ENCODE measurements at regions of chr1 and their contacts with region 1.

Region 1: DNA sequence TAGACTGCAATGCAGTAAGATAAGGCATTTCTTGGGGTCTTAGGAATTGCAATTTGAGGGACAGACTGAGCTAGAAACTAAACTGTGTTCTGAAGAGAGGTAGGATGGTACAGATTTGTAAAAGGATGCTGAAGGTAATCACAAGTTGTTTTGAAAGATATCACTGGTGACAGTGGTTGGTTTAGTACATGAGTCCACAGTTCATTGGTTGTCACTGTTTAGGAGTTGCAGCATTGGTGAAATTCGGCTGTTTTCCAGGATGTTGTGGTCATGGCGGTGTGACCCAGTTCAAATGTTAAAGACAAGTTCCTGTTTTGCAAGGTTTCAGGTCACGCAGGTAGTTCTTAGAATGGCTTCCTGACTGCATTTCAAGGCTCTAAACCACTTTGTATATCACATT is 292.8 kb upstream of the B3GALT2 start:
- DNase-seq: peak; percentile 89 to 95 (median 93)
- H3K4me3 ChIP-seq: no peak overlapping the region
- H3K4me3 Mint-ChIP-seq: peak overlapping the region in 7 of 8 donors; percentile 37 to 79 (median 65)
- H3K27ac ChIP-seq: peak overlapping the region; percentile 68
- H3K27ac Mint-ChIP-seq: peak overlapping the region; percentile 86 to 98 (median 96)
- H3K4me1 ChIP-seq: peaks cover 70% of the 10 kb centered on the region
- H3K4me1 Mint-ChIP-seq: peaks cover 42 to 75% (median 47%) of the 10 kb centered on the region in 4 donors
- H3K27me3 ChIP-seq: no peaks in the 10 kb centered on the region
- H3K27me3 Mint-ChIP-seq: no peaks in the 10 kb centered on the region

Region 2: DNA sequence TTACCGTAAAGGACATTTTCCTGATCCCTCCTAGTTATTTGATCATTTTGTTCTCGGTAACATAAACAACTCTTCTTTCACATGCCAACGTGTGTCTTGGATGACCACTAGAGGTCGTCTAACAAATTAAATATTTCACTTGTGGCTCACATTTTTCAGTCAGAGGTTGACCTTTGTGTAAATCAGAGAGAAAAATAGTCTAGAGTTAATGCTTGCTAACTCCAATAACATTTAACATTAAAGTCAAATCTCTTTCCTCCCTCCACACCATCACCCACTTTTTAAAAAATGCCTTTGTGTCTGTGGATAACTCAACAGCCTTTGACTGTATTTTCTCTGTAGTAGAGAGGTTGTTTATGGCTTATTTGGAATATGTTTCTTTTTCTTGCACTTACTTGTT is 72.3 kb before region 1 on chr1:
- CTCF ChIA-PET with region 1: interaction called, 3 read pairs
- POLR2A ChIA-PET with region 1: interaction called, 8 read pairs
- intact Hi-C with region 1: loop called (anchors 1 kb)
- DNase-seq: peak in 4 of 5 donors; percentile 48 to 63 (median 56)
- H3K4me3 ChIP-seq: no peak overlapping the region
- H3K4me3 Mint-ChIP-seq: peak overlapping the region in 6 of 8 donors; percentile 0 to 29 (median 8)
- H3K27ac ChIP-seq: no peak overlapping the region
- H3K27ac Mint-ChIP-seq: peak overlapping the region in 4 of 7 donors; percentile 15 to 81 (median 52)
- H3K4me1 ChIP-seq: peaks cover 26% of the 10 kb centered on the region
- H3K4me1 Mint-ChIP-seq: peaks cover 21 to 40% (median 29%) of the 10 kb centered on the region in 4 donors
- H3K27me3 ChIP-seq: no peaks in the 10 kb centered on the region
- H3K27me3 Mint-ChIP-seq: no peaks in the 10 kb centered on the region

Region 3: DNA sequence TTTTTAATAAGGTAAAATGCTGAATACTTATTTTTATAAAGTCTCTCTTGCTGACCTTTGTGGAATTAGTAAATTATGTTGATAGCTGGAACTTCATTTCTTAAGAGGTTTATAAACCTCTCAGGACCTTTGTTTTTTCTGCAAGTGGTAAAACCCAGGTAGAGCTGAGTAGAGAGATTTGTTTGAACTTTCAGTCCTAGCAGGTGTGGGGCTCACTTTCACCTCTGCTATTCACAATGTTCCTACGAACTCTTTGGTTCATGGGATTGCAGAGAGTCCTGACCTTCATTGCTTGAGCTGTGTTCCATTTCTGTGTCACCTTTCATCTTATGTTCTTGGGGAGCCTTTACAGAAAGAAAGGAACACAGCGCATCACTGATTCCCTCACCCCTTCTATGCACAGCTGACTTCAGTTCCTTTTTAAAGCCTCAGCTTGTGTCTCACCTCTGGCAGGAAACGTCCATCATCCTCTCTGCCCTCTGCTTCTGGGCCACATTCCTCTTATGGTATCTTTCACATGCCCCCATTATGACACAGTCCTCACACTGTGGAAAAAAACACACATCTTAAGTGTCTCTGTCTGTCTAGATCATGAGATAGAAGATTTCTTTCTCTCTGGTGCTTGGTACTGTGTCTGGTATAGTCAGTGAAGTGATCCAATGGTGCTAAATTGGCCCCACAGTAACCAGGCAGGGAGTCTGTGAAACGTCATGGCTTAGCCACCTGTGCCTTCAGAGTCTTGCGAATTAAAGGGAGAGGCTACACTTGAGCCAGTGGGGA is 30.3 kb before region 1 on chr1:
- CTCF ChIA-PET with region 1: interaction called, 3 read pairs
- POLR2A ChIA-PET with region 1: interaction called, 21 read pairs
- intact Hi-C with region 1: no loop called
- DNase-seq: peak; percentile 39 to 67 (median 41)
- H3K4me3 ChIP-seq: no peak overlapping the region
- H3K4me3 Mint-ChIP-seq: peak overlapping the region in 7 of 8 donors; percentile 1 to 53 (median 9)
- H3K27ac ChIP-seq: peak overlapping the region; percentile 36
- H3K27ac Mint-ChIP-seq: peak overlapping the region; percentile 68 to 95 (median 82)
- H3K4me1 ChIP-seq: peaks cover 18% of the 10 kb centered on the region
- H3K4me1 Mint-ChIP-seq: peaks cover 16 to 23% (median 18%) of the 10 kb centered on the region in 4 donors
- H3K27me3 ChIP-seq: no peaks in the 10 kb centered on the region
- H3K27me3 Mint-ChIP-seq: no peaks in the 10 kb centered on the region

Region 4: DNA sequence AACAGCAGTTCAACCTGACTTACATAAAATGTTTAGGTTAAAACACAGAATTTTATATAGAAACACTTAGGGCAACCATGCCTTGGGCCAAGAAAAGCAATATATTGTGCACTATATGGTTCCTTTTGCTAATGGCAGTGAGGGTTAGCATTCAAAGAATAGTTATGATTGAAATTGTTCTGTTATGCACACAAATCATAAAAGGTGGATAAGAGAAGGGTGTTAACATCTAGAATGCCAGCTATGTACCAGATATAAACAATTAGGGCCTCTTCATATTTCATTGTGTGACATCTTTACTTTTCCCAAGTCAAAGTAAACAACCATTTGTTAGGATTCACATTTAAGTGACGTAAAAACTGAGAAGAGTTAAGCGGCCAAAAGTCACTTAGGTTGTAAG is 15.2 kb after region 1 on chr1:
- CTCF ChIA-PET with region 1: interaction called, 3 read pairs
- POLR2A ChIA-PET with region 1: interaction called, 42 read pairs
- intact Hi-C with region 1: no loop called
- DNase-seq: no peak
- H3K4me3 ChIP-seq: no peak overlapping the region
- H3K4me3 Mint-ChIP-seq: no peak overlapping the region
- H3K27ac ChIP-seq: no peak overlapping the region
- H3K27ac Mint-ChIP-seq: peak overlapping the region in 4 of 7 donors; percentile 8 to 38 (median 26)
- H3K4me1 ChIP-seq: peaks cover 27% of the 10 kb centered on the region
- H3K4me1 Mint-ChIP-seq: peaks cover 22 to 45% (median 40%) of the 10 kb centered on the region in 4 donors
- H3K27me3 ChIP-seq: no peaks in the 10 kb centered on the region
- H3K27me3 Mint-ChIP-seq: no peaks in the 10 kb centered on the region

Region 5: GRCh38 chr1:193569096-193569982 is 90.2 kb after region 1 on chr1:
- CTCF ChIA-PET with region 1: no interaction called
- POLR2A ChIA-PET with region 1: no interaction called
- intact Hi-C with region 1: no loop called
- DNase-seq: peak; percentile 51 to 69 (median 57)
- H3K4me3 ChIP-seq: no peak overlapping the region
- H3K4me3 Mint-ChIP-seq: peak overlapping the region in 7 of 8 donors; percentile 45 to 84 (median 74)
- H3K27ac ChIP-seq: peak overlapping the region; percentile 43
- H3K27ac Mint-ChIP-seq: peak overlapping the region; percentile 79 to 99 (median 92)
- H3K4me1 ChIP-seq: peaks cover 26% of the 10 kb centered on the region
- H3K4me1 Mint-ChIP-seq: peaks cover 25 to 42% (median 33%) of the 10 kb centered on the region in 4 donors
- H3K27me3 ChIP-seq: no peaks in the 10 kb centered on the region
- H3K27me3 Mint-ChIP-seq: no peaks in the 10 kb centered on the region

Region 6: DNA sequence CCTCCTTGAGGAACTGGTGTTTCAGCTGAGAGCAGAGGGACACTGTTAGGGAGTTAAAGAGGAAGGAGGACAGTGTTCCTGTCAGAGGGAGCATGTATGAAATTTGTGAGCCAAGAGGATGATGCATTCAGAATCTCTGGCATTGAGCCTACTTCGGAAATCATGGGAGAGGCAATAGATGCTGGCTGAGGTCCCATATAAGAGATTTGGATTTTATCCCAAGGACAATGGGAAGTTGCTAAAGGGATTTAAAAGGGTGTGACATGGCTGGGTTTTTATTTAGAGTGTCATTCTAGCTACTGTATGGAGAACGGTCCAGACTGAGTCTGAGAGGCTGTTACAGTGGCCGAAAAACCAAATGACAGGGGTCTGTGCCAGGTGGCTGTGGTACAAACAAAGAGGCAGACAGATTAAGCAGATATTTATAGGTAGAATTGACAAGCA is 110.4 kb after region 1 on chr1:
- CTCF ChIA-PET with region 1: interaction called, 6 read pairs
- POLR2A ChIA-PET with region 1: interaction called, 15 read pairs
- intact Hi-C with region 1: loop called (anchors 5 kb)
- DNase-seq: no peak
- H3K4me3 ChIP-seq: no peak overlapping the region
- H3K4me3 Mint-ChIP-seq: peak overlapping the region in 3 of 8 donors; percentile 2 to 52 (median 2)
- H3K27ac ChIP-seq: no peak overlapping the region
- H3K27ac Mint-ChIP-seq: peak overlapping the region in 6 of 7 donors; percentile 14 to 86 (median 78)
- H3K4me1 ChIP-seq: peaks cover 40% of the 10 kb centered on the region
- H3K4me1 Mint-ChIP-seq: peaks cover 29 to 45% (median 37%) of the 10 kb centered on the region in 4 donors
- H3K27me3 ChIP-seq: no peaks in the 10 kb centered on the region
- H3K27me3 Mint-ChIP-seq: no peaks in the 10 kb centered on the region

Region 7: DNA sequence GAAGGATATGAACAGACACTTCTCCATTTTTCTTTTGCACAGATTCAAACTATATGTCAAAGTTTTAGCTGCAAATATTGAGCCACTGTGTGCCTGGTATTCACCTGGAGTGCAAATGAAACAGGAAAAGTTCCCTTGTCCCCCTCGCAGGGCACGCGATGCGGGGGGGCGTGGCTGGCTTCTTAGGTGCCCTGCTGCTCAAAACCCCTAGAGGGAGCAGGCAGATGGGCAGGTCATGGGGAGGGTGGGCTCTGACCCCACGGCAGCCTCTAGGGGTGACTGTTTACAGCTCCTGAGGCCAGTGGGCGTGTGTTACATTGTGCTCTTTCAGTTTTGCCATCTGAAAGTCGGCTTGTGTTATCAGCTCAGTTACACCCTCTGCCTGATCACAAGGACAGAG is 638.4 kb after region 1 on chr1:
- CTCF ChIA-PET with region 1: no interaction called
- POLR2A ChIA-PET with region 1: no interaction called
- intact Hi-C with region 1: no loop called
- DNase-seq: no peak
- H3K4me3 ChIP-seq: no peak overlapping the region
- H3K4me3 Mint-ChIP-seq: peak overlapping the region in 1 of 8 donors; percentile 10
- H3K27ac ChIP-seq: no peak overlapping the region
- H3K27ac Mint-ChIP-seq: peak overlapping the region in 1 of 7 donors; percentile 37
- H3K4me1 ChIP-seq: no peaks in the 10 kb centered on the region
- H3K4me1 Mint-ChIP-seq: no peaks in the 10 kb centered on the region
- H3K27me3 ChIP-seq: no peaks in the 10 kb centered on the region
- H3K27me3 Mint-ChIP-seq: no peaks in the 10 kb centered on the region

Measured in CD4-positive, alpha-beta memory T cell (primary cell).